Panc1 (cell line): ENCODE measurements at regions of chr3 and their contacts with region 1.

Region 1: GRCh38 chr3:68861521-68862296 is 70.6 kb downstream of the TAFA4 start:
- DNase-seq: no peak
- ATAC-seq: no peak
- H3K4me3 ChIP-seq: no peak overlapping the region
- H3K27ac ChIP-seq: no peak overlapping the region
- H3K4me1 ChIP-seq: no peaks in the 10 kb centered on the region
- H3K27me3 ChIP-seq: no peaks in the 10 kb centered on the region
- CTCF ChIP-seq: no peak

Region 2: DNA sequence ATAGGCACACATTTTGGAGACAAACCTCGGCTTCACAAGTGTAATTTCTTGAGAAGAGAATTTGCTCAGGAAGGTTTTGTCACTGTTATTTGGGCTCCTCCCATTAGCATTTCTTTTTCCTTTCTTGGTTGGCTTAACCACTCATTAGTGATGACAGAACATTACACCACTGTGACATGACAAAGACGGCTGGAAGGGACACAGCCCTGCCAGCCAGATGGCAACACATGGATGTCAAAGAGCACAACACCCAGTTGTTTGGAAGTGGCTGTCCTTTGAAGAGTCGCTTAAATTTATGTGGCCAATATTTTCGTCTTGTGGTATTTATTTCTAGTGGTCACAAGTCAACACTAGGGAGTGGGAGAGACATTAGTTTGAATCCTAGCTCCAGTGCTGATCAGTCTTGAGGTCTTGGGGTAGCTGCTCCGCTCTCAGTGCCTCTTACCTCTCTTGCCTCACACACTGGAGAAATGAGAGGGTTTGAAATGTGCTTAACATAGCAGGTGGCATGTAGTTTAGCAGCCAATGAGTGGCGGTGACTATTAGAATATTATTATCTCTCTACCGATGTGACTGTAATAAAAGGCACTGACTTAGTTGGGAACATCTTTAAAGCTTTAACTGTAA is 431.4 kb after region 1 on chr3:
- CTCF ChIA-PET with region 1: no interaction called
- POLR2A ChIA-PET with region 1: interaction called, 15 read pairs
- in situ Hi-C with region 1: no loop called
- intact Hi-C with region 1: no loop called
- DNase-seq: no peak
- ATAC-seq: no peak
- H3K4me3 ChIP-seq: no peak overlapping the region
- H3K27ac ChIP-seq: no peak overlapping the region
- H3K4me1 ChIP-seq: no peaks in the 10 kb centered on the region
- H3K27me3 ChIP-seq: no peaks in the 10 kb centered on the region
- CTCF ChIP-seq: no peak